Activated B cell treated with CpG ODN at 0.5 μM for 24 hours (primary cell): ENCODE measurements at regions of chr2 and their contacts with region 1.

Region 1: GRCh38 chr2:27086090-27086723 is 365 bp upstream of the KHK start:
- DNase-seq: peak; percentile 99
- ATAC-seq: peak; percentile 92
- H3K4me3 Mint-ChIP-seq: peak overlapping the region; percentile 87
- H3K27ac Mint-ChIP-seq: peak overlapping the region; percentile 86
- H3K4me1 Mint-ChIP-seq: peaks cover 18% of the 10 kb centered on the region
- H3K27me3 Mint-ChIP-seq: no peaks in the 10 kb centered on the region
- CTCF ChIP-seq: peak; percentile 44

Region 2: DNA sequence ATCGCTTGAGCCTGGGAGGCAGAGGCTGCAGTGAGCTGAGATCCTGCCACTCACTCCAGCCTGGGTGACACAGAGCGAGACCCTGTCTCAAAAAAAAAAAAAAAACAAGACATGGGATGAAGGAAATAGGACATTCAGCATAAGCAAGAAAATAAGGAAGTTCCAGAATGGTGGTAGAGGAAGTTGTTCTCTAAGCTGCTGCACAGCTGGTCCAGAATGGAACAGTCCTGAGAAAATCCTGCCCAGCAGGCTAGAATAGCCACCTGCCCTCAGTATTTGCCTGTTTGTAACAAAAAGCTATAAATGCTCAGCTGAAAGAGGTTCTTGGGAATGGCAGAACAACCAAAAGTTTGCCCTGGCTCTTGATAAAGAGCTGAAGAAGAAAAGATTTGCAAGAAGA is 126.9 kb before region 1 on chr2:
- CTCF ChIA-PET with region 1: interaction called, 12 read pairs
- POLR2A ChIA-PET with region 1: no interaction called
- intact Hi-C with region 1: loop called (anchors 1 kb)
- DNase-seq: no peak
- ATAC-seq: no peak
- H3K4me3 Mint-ChIP-seq: no peak overlapping the region
- H3K27ac Mint-ChIP-seq: no peak overlapping the region
- H3K4me1 Mint-ChIP-seq: no peaks in the 10 kb centered on the region
- H3K27me3 Mint-ChIP-seq: peaks cover 21% of the 10 kb centered on the region
- CTCF ChIP-seq: no peak

Region 3: GRCh38 chr2:26982102-26982742 is 104.0 kb before region 1 on chr2:
- CTCF ChIA-PET with region 1: no interaction called
- POLR2A ChIA-PET with region 1: no interaction called
- intact Hi-C with region 1: no loop called
- DNase-seq: no peak
- ATAC-seq: peak; percentile 56
- H3K4me3 Mint-ChIP-seq: no peak overlapping the region
- H3K27ac Mint-ChIP-seq: no peak overlapping the region
- H3K4me1 Mint-ChIP-seq: no peaks in the 10 kb centered on the region
- H3K27me3 Mint-ChIP-seq: peaks cover 20% of the 10 kb centered on the region
- CTCF ChIP-seq: no peak

Region 4: GRCh38 chr2:27032495-27033252 is 53.5 kb before region 1 on chr2 and contains the start of gene TMEM214:
- CTCF ChIA-PET with region 1: interaction called, 3 read pairs
- POLR2A ChIA-PET with region 1: interaction called, 5 read pairs
- intact Hi-C with region 1: loop called (anchors 1 kb)
- DNase-seq: peak; percentile 76
- ATAC-seq: peak; percentile 95
- H3K4me3 Mint-ChIP-seq: peak within 1 kb of the TSS; percentile 93
- H3K27ac Mint-ChIP-seq: peak within 1 kb of the TSS; percentile 80
- H3K4me1 Mint-ChIP-seq: peaks cover 32% of the 10 kb centered on the region
- H3K27me3 Mint-ChIP-seq: no peaks in the 10 kb centered on the region
- CTCF ChIP-seq: no peak
- total RNA-seq, gene TMEM214: 84.4 and 92.1 TPM in 2 replicates

Region 5: DNA sequence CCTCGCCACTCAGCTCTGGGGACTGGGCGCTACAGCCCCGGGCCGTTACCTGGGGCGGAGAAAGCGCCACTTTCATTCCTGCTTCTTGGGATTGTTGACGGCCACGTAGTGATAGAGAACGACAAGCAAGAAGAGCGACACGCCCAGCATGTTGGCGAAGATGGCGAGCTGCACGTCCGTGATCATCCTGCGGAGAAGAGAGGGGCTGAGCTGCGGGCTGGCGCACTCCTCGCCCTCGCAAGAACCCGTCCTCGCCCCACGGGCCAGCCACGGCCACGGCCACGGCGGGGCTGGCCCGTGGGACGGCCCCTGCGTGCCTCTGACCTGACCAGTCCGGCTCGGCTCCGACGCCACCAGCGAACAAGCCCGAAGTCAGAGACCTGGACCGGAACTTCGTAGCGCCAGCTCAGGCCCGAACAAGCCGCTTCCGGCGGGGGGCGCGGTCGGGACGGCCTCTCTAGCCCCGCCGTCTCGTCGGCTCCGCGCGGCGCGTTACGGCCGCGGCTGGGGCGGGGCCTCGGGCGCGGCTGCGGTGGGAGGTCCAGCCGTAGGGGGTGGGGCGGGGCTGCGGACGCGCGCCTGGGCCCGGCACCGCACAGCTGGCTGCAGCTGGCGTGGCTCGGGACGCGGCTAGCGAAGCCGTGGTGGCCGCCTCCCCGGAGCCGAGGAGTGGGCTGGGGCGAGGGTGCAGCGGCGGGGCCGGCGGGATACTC is 14.8 kb before region 1 on chr2 and contains the start of gene OST4:
- CTCF ChIA-PET with region 1: interaction called, 16 read pairs
- POLR2A ChIA-PET with region 1: interaction called, 43 read pairs
- intact Hi-C with region 1: loop called (anchors 1 kb)
- DNase-seq: peak; percentile 92
- ATAC-seq: peak; percentile 96
- H3K4me3 Mint-ChIP-seq: peak within 1 kb of the TSS; percentile 97
- H3K27ac Mint-ChIP-seq: peak within 1 kb of the TSS; percentile 90
- H3K4me1 Mint-ChIP-seq: peaks cover 67% of the 10 kb centered on the region
- H3K27me3 Mint-ChIP-seq: no peaks in the 10 kb centered on the region
- CTCF ChIP-seq: no peak
- total RNA-seq, gene OST4: 243 and 265 TPM in 2 replicates

Region 6: GRCh38 chr2:27191053-27191829 is 105.0 kb after region 1 on chr2:
- CTCF ChIA-PET with region 1: no interaction called
- POLR2A ChIA-PET with region 1: no interaction called
- intact Hi-C with region 1: loop called (anchors 1 kb)
- DNase-seq: no peak
- ATAC-seq: peak; percentile 77
- H3K4me3 Mint-ChIP-seq: no peak overlapping the region
- H3K27ac Mint-ChIP-seq: no peak overlapping the region
- H3K4me1 Mint-ChIP-seq: no peaks in the 10 kb centered on the region
- H3K27me3 Mint-ChIP-seq: peaks cover 4% of the 10 kb centered on the region
- CTCF ChIP-seq: no peak

Region 7: GRCh38 chr2:27256855-27257454 is 170.7 kb after region 1 on chr2:
- CTCF ChIA-PET with region 1: no interaction called
- POLR2A ChIA-PET with region 1: no interaction called
- intact Hi-C with region 1: no loop called
- DNase-seq: no peak
- ATAC-seq: no peak
- H3K4me3 Mint-ChIP-seq: no peak overlapping the region
- H3K27ac Mint-ChIP-seq: no peak overlapping the region
- H3K4me1 Mint-ChIP-seq: peaks cover 11% of the 10 kb centered on the region
- H3K27me3 Mint-ChIP-seq: peaks cover 58% of the 10 kb centered on the region
- CTCF ChIP-seq: no peak

Region 8: DNA sequence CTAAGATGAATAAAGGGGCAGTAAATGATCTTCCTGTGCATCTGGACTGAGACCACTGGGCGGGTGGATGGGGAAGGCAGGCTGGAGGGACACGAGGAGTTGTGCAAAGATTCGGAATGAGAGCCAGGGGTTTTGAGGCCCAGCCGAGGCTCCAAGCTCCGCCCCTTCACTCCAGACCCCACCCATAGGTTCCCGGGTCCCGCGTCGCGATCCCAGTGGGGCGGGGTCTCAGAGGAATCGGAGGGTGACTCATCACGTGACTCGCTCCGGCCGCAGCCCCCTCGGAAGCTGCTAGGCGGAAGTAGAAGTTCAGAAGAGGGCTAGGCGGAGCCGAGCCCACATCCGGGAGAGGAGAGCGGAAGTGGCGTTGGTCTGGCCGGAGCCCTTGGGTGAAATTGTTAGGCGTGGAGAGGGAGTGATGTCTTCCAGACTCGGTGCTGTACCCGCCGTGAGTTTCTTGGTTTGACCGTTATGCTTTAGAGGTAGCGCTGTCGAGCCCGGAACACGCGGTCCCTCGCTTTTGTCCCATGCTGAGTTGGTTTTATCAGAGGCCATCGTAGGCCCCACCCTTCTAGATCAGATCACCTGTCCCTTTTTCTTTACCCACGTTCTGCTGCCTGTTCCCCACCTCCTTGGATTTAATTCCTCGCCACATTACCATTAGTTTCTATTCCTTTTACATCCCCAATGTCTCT is 496.6 kb after region 1 on chr2 and contains the start of gene ZNF512:
- CTCF ChIA-PET with region 1: no interaction called
- POLR2A ChIA-PET with region 1: no interaction called
- intact Hi-C with region 1: loop called (anchors 10 kb)
- DNase-seq: peak; percentile 81
- ATAC-seq: peak; percentile 95
- H3K4me3 Mint-ChIP-seq: peak within 1 kb of the TSS; percentile 97
- H3K27ac Mint-ChIP-seq: peak within 1 kb of the TSS; percentile 90
- H3K4me1 Mint-ChIP-seq: peaks cover 48% of the 10 kb centered on the region
- H3K27me3 Mint-ChIP-seq: peaks cover 4% of the 10 kb centered on the region
- CTCF ChIP-seq: no peak
- total RNA-seq, gene ZNF512: 45.4 and 48.7 TPM in 2 replicates